Activated CD8-positive, alpha-beta T cell treated with anti-CD3 and anti-CD28 coated beads, Interleukin-2, amount 10 ng/mL, durations not matched to agents 7 days and 5 days (primary cell): ENCODE measurements at regions of chr17 and their contacts with region 1.

Region 1: GRCh38 chr17:40417609-40418427 is at the start of gene TOP2A:
- DNase-seq: peak; percentile 98
- ATAC-seq: peak; percentile 97
- H3K4me3 Mint-ChIP-seq: peak within 1 kb of the TSS; percentile 98
- H3K27ac Mint-ChIP-seq: peak within 1 kb of the TSS; percentile 98
- H3K4me1 Mint-ChIP-seq: peaks cover 50% of the 10 kb centered on the region
- H3K27me3 Mint-ChIP-seq: no peaks in the 10 kb centered on the region
- total RNA-seq, gene TOP2A: 517 to 567 TPM

Region 2: GRCh38 chr17:40399185-40399584 is 18.6 kb before region 1 on chr17:
- CTCF ChIA-PET with region 1: interaction called, 28 read pairs
- POLR2A ChIA-PET with region 1: interaction called, 5 read pairs
- DNase-seq: no peak
- ATAC-seq: peak; percentile 67
- H3K4me3 Mint-ChIP-seq: no peak overlapping the region
- H3K27ac Mint-ChIP-seq: no peak overlapping the region
- H3K4me1 Mint-ChIP-seq: peaks cover 24% of the 10 kb centered on the region
- H3K27me3 Mint-ChIP-seq: no peaks in the 10 kb centered on the region

Region 3: GRCh38 chr17:40433551-40434415 is 16.0 kb after region 1 on chr17:
- CTCF ChIA-PET with region 1: interaction called, 22 read pairs
- POLR2A ChIA-PET with region 1: interaction called, 9 read pairs
- DNase-seq: peak; percentile 54
- ATAC-seq: peak; percentile 77
- H3K4me3 Mint-ChIP-seq: no peak overlapping the region
- H3K27ac Mint-ChIP-seq: no peak overlapping the region
- H3K4me1 Mint-ChIP-seq: peaks cover 20% of the 10 kb centered on the region
- H3K27me3 Mint-ChIP-seq: peaks cover 8% of the 10 kb centered on the region

Region 4: DNA sequence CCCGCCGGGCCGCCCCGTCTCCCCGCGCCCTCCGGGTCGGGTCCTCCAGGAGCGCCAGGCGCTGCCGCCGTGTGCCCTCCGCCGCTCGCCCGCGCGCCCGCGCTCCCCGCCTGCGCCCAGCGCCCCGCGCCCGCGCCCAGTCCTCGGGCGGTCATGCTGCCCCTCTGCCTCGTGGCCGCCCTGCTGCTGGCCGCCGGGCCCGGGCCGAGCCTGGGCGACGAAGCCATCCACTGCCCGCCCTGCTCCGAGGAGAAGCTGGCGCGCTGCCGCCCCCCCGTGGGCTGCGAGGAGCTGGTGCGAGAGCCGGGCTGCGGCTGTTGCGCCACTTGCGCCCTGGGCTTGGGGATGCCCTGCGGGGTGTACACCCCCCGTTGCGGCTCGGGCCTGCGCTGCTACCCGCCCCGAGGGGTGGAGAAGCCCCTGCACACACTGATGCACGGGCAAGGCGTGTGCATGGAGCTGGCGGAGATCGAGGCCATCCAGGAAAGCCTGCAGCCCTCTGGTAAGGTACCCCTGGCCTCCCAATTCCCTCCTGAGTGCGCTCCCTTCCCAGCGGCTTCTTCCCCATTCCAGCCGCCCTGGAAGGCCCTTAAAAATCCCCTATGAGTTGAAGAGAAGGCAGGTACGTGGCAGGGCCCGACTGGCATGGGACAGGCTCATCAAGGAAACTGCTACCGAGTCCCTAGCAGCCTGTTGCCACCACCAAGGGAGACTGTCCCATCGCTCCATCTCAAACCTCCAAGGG is 25.9 kb after region 1 on chr17:
- CTCF ChIA-PET with region 1: interaction called, 49 read pairs
- POLR2A ChIA-PET with region 1: interaction called, 36 read pairs
- DNase-seq: peak; percentile 79
- ATAC-seq: peak; percentile 83
- H3K4me3 Mint-ChIP-seq: peak overlapping the region; percentile 82
- H3K27ac Mint-ChIP-seq: peak overlapping the region; percentile 92
- H3K4me1 Mint-ChIP-seq: peaks cover 59% of the 10 kb centered on the region
- H3K27me3 Mint-ChIP-seq: peaks cover 2% of the 10 kb centered on the region

Region 5: GRCh38 chr17:40474419-40475002 is 56.7 kb after region 1 on chr17:
- CTCF ChIA-PET with region 1: interaction called, 19 read pairs
- POLR2A ChIA-PET with region 1: interaction called, 5 read pairs
- DNase-seq: no peak
- ATAC-seq: no peak
- H3K4me3 Mint-ChIP-seq: no peak overlapping the region
- H3K27ac Mint-ChIP-seq: peak overlapping the region; percentile 46
- H3K4me1 Mint-ChIP-seq: peaks cover 34% of the 10 kb centered on the region
- H3K27me3 Mint-ChIP-seq: peaks cover 5% of the 10 kb centered on the region

Region 6: DNA sequence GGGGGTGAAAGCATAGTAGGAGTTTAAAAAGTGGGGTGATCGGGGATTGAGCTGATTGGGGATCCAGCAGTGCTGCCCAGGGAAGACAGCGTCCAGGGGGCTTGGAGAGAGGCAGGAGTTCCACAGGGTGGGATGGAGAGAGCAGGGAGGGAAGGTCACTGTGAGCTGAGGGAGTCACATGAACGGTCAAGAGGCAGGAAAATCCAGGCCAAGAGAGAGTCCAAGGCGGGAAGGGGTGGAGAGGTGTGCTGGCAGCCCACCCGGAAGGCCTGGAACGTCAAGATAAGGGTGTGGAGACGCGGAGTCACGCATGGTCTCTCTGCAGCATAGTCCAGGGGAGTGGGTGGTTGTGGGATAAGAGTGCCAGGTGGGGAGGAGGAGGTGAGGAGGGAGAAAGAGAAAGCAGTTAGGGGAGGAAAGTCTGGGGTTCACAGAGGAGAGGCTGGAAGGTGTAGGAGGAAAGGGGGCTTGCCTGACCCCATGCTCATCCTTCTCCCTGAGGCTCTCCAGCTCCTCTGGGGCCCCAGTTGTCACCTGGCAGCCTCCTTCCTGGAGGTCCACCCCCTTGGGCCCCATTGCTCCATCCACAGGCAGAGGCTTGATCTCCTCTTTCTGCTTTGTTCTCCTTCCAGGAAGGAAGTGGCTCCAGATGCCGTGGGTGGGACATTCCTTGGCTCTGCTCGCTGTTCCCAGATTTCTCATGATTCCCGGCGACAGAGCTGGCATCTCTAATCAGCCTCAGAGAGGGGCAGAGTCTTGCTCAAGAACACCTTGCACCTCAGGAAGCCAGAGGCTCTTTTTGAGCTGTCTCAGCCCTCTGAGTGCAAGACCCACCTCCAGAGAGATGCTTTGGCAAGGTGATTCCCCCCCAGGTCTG is 118.7 kb after region 1 on chr17:
- CTCF ChIA-PET with region 1: interaction called, 122 read pairs
- POLR2A ChIA-PET with region 1: interaction called, 67 read pairs
- DNase-seq: no peak
- ATAC-seq: no peak
- H3K4me3 Mint-ChIP-seq: no peak overlapping the region
- H3K27ac Mint-ChIP-seq: peak overlapping the region; percentile 39
- H3K4me1 Mint-ChIP-seq: peaks cover 100% of the 10 kb centered on the region
- H3K27me3 Mint-ChIP-seq: no peaks in the 10 kb centered on the region

Region 7: GRCh38 chr17:40548982-40549685 is 131.3 kb after region 1 on chr17:
- CTCF ChIA-PET with region 1: interaction called, 4 read pairs
- POLR2A ChIA-PET with region 1: interaction called, 12 read pairs
- DNase-seq: peak; percentile 25
- ATAC-seq: no peak
- H3K4me3 Mint-ChIP-seq: peak overlapping the region; percentile 59
- H3K27ac Mint-ChIP-seq: peak overlapping the region; percentile 93
- H3K4me1 Mint-ChIP-seq: peaks cover 92% of the 10 kb centered on the region
- H3K27me3 Mint-ChIP-seq: no peaks in the 10 kb centered on the region